ENCODE measurements at regions of chr17 and their contacts with region 1.

Region 1: GRCh38 chr17:3845621-3846441 is at the start of gene NCBP3:
- DNase-seq: peak; percentile 44
- H3K4me3 ChIP-seq: peak within 1 kb of the TSS; percentile 93
- CTCF ChIP-seq: peak; percentile 99

Region 2: GRCh38 chr17:3780986-3781385 is 64.8 kb before region 1 on chr17:
- CTCF ChIA-PET with region 1: interaction called, 14 read pairs
- POLR2A ChIA-PET with region 1: no interaction called
- DNase-seq: no peak
- H3K4me3 ChIP-seq: no peak overlapping the region
- CTCF ChIP-seq: no peak

Region 3: GRCh38 chr17:3835410-3836229 is 10.2 kb before region 1 on chr17:
- CTCF ChIA-PET with region 1: interaction called, 128 read pairs
- POLR2A ChIA-PET with region 1: interaction called, 3 read pairs
- DNase-seq: no peak
- H3K4me3 ChIP-seq: no peak overlapping the region
- CTCF ChIP-seq: no peak

Region 4: DNA sequence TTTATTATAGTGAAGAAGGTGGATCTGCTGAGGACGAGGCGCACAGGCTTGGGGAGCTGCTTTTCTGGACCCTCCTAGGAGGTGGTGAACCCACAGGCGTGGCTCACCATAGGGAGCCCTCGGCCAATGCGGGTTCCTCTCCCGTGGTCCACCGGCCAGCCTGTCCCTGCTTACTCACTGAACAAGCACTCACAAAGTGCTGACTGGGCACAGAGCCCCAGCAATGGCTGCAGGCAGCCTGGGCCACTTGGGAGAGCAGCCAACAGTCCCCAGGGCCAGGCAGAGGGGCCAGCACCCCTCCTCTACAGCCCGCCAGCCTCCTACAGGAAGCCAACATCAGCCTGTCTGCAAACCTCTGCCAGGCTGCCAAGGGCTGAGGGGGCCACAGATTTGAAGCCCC is 19.3 kb after region 1 on chr17:
- CTCF ChIA-PET with region 1: interaction called, 172 read pairs
- POLR2A ChIA-PET with region 1: no interaction called
- DNase-seq: no peak
- H3K4me3 ChIP-seq: no peak overlapping the region
- CTCF ChIP-seq: no peak

Region 5: GRCh38 chr17:3953542-3953941 is 107.7 kb after region 1 on chr17:
- CTCF ChIA-PET with region 1: no interaction called
- POLR2A ChIA-PET with region 1: no interaction called
- DNase-seq: no peak
- H3K4me3 ChIP-seq: no peak overlapping the region
- CTCF ChIP-seq: no peak

Region 6: GRCh38 chr17:4074831-4075495 is 229.1 kb after region 1 on chr17:
- CTCF ChIA-PET with region 1: interaction called, 12 read pairs
- POLR2A ChIA-PET with region 1: no interaction called
- DNase-seq: no peak
- H3K4me3 ChIP-seq: no peak overlapping the region
- CTCF ChIP-seq: peak; percentile 59

Measured in AG04449 (cell line).